ENCODE measurements at regions of chr3 and their contacts with region 1.

Region 1: DNA sequence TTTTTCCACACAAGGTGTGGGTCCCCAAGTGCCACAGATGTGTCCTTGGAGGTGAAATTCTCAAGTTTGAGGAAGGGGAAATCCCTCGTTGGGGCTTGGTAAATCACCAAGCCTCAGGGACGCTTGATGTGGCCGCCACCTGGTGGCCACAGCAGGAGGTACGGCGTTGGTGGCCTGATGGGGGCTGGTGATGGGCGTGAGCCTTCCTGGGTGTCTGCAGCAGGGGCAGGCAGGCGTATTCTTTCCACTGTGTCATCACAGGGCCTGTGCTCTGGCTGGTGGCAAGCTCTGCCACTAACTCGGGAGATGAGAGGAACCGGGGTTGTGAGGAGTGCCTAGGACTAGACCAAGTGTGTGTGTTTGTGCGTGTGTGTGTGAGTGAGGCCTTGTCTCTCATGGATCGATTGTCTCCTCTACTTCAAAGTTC is 4.2 kb downstream of the ACOX2 start:
- DNase-seq: peak; percentile 16
- H3K4me3 ChIP-seq: no peak overlapping the region
- H3K27ac ChIP-seq: no peak overlapping the region
- H3K27me3 ChIP-seq: no peaks in the 10 kb centered on the region
- CTCF ChIP-seq: peak; percentile 93

Region 2: GRCh38 chr3:58491506-58492402 is 41.1 kb before region 1 on chr3 and contains the start of gene KCTD6:
- CTCF ChIA-PET with region 1: interaction called, 14 read pairs
- POLR2A ChIA-PET with region 1: interaction called, 3 read pairs
- DNase-seq: peak; percentile 80
- H3K4me3 ChIP-seq: peak within 1 kb of the TSS; percentile 84
- H3K27ac ChIP-seq: no peak within 1 kb of the TSS
- H3K27me3 ChIP-seq: no peaks in the 10 kb centered on the region
- CTCF ChIP-seq: peak; percentile 59
- polyA plus RNA-seq, gene KCTD6: 9.6 and 13.7 TPM in 2 replicates

Region 3: DNA sequence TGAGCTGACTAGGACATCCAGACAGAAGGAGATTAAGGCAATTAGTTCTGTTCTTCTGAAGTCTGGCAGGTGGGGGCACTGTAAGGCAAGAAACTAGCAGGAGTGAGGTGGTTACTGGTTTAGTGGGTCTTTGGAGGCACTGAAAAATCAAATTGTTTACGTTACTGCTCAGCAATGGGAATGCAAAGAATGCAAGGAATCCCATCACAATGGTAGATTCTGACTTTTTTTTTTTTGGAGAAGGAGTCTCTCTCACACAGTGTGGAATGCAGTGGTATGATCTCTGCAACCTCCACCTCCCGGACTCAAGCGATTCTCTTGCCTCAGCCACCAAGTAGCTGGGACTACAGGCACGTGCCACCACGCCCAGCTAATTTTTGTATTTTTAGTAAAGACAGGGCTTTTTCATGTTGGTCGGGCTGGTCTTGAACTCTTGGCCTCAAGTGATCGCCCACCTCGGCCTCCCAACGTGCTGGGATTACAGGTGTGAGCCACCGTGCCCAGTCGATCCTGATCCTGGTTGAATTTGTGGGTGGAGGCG is 28.0 kb after region 1 on chr3:
- CTCF ChIA-PET with region 1: interaction called, 10 read pairs
- POLR2A ChIA-PET with region 1: interaction called, 4 read pairs
- DNase-seq: peak; percentile 95
- H3K4me3 ChIP-seq: no peak overlapping the region
- H3K27ac ChIP-seq: peak overlapping the region; percentile 89
- H3K27me3 ChIP-seq: no peaks in the 10 kb centered on the region
- CTCF ChIP-seq: peak; percentile 73

Measured in AG04450 (cell line).